CD4-positive, alpha-beta memory T cell (primary cell): ENCODE measurements at regions of chr17 and their contacts with region 1.

Region 1: DNA sequence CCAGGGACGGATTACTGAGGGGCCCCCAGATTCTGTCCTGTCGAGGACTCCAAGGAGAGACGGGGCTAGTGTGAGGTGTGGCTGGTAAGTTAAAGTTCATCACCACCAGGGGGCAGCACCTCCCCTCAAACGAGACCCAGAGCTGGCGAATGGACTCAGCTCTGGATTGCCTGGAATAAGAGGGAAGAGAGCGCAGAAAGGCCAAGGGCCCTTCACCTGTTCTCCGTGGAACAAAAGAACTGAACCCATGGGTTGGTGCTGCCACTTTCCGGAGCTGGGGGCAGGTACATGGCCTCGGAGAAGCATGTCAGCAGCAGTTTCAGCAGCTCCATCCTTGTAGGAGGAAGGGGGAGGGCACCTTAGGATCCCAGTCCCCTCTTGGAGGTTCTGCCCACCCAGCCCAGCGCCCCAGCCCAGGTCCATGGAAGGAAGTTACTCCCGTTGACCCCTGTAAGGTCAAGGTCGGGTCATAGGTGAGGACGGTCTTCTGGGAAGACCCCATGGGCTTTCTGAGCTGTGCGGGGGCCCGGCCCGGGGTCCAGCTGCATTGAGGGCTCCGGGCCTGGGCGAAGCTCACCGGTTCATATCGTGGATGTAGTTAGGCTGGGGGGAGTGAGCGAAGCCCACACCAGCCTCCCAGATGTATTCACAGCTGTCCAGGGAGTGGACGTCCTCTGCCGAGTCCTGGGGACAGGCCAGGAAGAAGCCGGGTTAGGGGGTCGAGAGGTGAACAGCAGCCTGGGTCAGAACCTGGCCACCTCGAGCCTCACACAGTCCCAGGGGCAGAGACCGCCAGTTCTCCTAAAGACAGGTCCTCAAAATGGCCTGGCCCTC is 10.7 kb downstream of the HID1 start:
- DNase-seq: peak; percentile 76 to 80 (median 77)
- H3K4me3 ChIP-seq: no peak overlapping the region
- H3K4me3 Mint-ChIP-seq: peak overlapping the region in 1 of 8 donors; percentile 31
- H3K27ac ChIP-seq: no peak overlapping the region
- H3K27ac Mint-ChIP-seq: peak overlapping the region in 2 of 7 donors; percentile 59 to 66
- H3K4me1 ChIP-seq: peaks cover 6% of the 10 kb centered on the region
- H3K4me1 Mint-ChIP-seq: peaks cover 4 to 13% (median 8%) of the 10 kb centered on the region in 4 donors
- H3K27me3 ChIP-seq: no peaks in the 10 kb centered on the region
- H3K27me3 Mint-ChIP-seq: no peaks in the 10 kb centered on the region

Region 2: GRCh38 chr17:74790161-74791054 is 171.5 kb before region 1 on chr17:
- CTCF ChIA-PET with region 1: interaction called, 9 read pairs
- POLR2A ChIA-PET with region 1: no interaction called
- intact Hi-C with region 1: loop called (anchors 1 kb)
- DNase-seq: no peak
- H3K4me3 ChIP-seq: no peak overlapping the region
- H3K4me3 Mint-ChIP-seq: peak overlapping the region in 6 of 8 donors; percentile 51 to 70 (median 58)
- H3K27ac ChIP-seq: no peak overlapping the region
- H3K27ac Mint-ChIP-seq: peak overlapping the region in 4 of 7 donors; percentile 42 to 82 (median 68)
- H3K4me1 ChIP-seq: peaks cover 19% of the 10 kb centered on the region
- H3K4me1 Mint-ChIP-seq: peaks cover 17 to 41% (median 29%) of the 10 kb centered on the region in 4 donors
- H3K27me3 ChIP-seq: no peaks in the 10 kb centered on the region
- H3K27me3 Mint-ChIP-seq: no peaks in the 10 kb centered on the region

Region 3: DNA sequence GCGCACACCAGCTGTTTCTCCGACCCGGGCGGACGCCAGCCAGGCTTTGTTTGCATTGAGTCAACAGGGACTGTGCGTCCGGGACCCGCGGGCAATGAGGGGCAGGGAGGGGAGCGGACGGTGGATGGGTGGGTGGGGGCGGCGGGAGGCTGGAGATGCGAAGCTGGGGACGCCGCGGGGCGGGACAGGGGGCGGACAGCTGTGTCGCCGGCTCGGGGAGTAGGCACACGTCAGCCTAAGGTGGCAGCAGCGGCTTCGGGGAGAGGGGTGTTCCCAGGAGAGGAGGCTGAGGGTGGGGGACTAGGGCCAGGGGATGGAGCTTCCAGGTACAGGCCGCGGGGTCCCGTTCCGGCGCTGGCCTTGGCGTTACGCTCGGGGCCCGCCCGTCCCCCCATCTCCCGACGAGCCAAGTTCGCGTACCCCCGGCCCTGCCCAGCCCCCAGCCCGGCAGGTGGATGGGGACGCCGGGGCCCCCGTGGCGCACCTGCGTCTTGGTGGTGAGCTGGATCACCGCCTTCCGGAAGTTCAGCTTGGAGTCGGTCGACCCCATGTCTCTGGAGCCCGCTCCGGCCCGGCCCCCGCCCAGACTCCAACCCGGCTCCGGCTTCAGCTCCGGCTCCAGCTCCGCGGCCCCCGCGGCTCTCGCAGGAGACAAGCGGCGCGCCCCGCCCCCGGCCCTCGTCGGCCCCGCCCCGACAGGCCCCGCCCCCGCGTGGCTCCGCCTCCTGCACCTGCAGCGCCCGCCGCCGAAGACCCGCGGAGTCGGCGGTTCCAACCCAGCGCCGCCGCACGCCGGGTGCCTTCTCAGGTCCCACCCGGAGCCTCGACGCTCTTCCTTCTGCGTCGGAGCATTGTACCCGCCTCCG is 10.5 kb after region 1 on chr17 and contains the start of gene HID1:
- CTCF ChIA-PET with region 1: interaction called, 80 read pairs
- POLR2A ChIA-PET with region 1: interaction called, 8 read pairs
- intact Hi-C with region 1: no loop called
- DNase-seq: peak; percentile 71 to 75 (median 74)
- H3K4me3 ChIP-seq: peak within 1 kb of the TSS; percentile 36 to 62
- H3K4me3 Mint-ChIP-seq: peak within 1 kb of the TSS; percentile 81 to 92 (median 86)
- H3K27ac ChIP-seq: peak within 1 kb of the TSS; percentile 32
- H3K27ac Mint-ChIP-seq: peak within 1 kb of the TSS; percentile 57 to 90 (median 74)
- H3K4me1 ChIP-seq: peaks cover 15% of the 10 kb centered on the region
- H3K4me1 Mint-ChIP-seq: peaks cover 4 to 11% (median 7%) of the 10 kb centered on the region in 4 donors
- H3K27me3 ChIP-seq: no peaks in the 10 kb centered on the region
- H3K27me3 Mint-ChIP-seq: peaks cover 3 to 5% of the 10 kb centered on the region in 2 donors
- total RNA-seq, gene HID1: 17.5 to 19.5 TPM

Region 4: DNA sequence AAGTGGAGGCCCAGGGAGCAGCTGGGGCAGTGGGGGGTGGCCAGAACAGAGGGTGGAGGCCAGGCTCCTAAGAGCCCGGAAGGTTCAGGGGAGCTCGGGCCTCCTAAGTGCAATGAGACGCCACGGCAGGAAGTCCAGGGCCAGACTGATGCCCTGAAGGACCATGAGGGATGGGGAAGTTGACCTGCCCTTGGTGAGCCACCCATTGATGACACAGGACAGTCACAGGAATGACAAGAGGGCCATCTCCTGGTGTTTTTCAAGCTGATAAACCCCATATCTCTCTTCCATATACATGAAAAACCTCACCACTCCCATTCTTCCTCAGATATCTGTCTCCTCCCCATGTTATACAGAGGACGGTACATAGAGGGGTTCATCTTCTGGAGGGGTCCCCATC is 44.8 kb after region 1 on chr17:
- CTCF ChIA-PET with region 1: interaction called, 89 read pairs
- POLR2A ChIA-PET with region 1: interaction called, 20 read pairs
- intact Hi-C with region 1: loop called (anchors 1 kb)
- DNase-seq: no peak
- H3K4me3 ChIP-seq: no peak overlapping the region
- H3K4me3 Mint-ChIP-seq: no peak overlapping the region
- H3K27ac ChIP-seq: no peak overlapping the region
- H3K27ac Mint-ChIP-seq: no peak overlapping the region
- H3K4me1 ChIP-seq: peaks cover under 1% of the 10 kb centered on the region
- H3K4me1 Mint-ChIP-seq: peaks cover 0 to under 1% (median 0%) of the 10 kb centered on the region in 4 donors
- H3K27me3 ChIP-seq: no peaks in the 10 kb centered on the region
- H3K27me3 Mint-ChIP-seq: peaks cover 2% of the 10 kb centered on the region in 2 donors

Region 5: GRCh38 chr17:75034236-75034908 is 72.5 kb after region 1 on chr17:
- CTCF ChIA-PET with region 1: interaction called, 9 read pairs
- POLR2A ChIA-PET with region 1: interaction called, 11 read pairs
- intact Hi-C with region 1: no loop called
- DNase-seq: peak; percentile 73 to 83 (median 75)
- H3K4me3 ChIP-seq: peak overlapping the region; percentile 64 to 70
- H3K4me3 Mint-ChIP-seq: peak overlapping the region; percentile 79 to 91 (median 88)
- H3K27ac ChIP-seq: peak overlapping the region; percentile 55
- H3K27ac Mint-ChIP-seq: peak overlapping the region; percentile 99 to 100 (median 100)
- H3K4me1 ChIP-seq: peaks cover 57% of the 10 kb centered on the region
- H3K4me1 Mint-ChIP-seq: peaks cover 31 to 69% (median 54%) of the 10 kb centered on the region in 4 donors
- H3K27me3 ChIP-seq: no peaks in the 10 kb centered on the region
- H3K27me3 Mint-ChIP-seq: peaks cover 0 to 14% of the 10 kb centered on the region in 2 donors

Region 6: DNA sequence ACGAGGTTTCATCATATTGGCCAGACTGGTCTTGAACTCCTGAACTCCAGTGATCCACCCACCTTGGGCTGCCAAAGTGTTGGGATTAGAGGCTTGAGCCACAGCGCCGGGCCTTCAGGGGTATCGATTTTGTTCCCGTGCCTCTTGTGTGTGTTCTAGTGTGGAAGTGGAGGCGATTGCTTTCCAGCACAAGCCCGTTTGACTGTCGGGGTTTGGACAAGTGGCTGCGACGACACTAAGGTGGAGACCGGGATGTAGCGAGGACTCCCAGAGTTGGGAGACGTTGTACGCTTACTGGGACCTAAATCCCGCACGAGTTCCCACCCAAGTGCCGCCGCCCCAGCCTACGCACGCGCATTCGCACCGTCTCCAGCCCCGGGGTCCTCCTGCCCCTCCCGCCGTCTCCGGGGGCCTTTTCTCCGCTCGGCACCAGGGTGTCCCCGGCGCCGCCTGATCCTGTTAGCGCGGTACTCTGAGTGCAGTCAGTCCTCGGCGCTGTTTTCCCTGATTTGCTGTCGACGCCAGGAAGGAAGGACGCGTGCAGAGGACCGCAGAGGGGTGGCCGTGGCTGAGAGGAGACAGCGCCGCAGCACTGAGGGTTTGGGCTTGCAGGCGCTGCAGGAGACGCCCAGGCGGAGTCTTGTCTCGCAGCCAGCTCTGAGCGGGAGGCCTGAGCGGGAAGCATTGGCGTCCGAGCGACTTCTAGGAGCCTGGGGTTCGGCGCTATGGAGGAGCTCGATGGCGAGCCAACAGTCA is 243.3 kb after region 1 on chr17 and contains the start of gene NUP85:
- CTCF ChIA-PET with region 1: interaction called, 107 read pairs
- POLR2A ChIA-PET with region 1: interaction called, 11 read pairs
- intact Hi-C with region 1: loop called (anchors 1 kb)
- DNase-seq: peak; percentile 88 to 95 (median 93)
- H3K4me3 ChIP-seq: peak within 1 kb of the TSS; percentile 55 to 86
- H3K4me3 Mint-ChIP-seq: peak within 1 kb of the TSS; percentile 93 to 99 (median 96)
- H3K27ac ChIP-seq: peak within 1 kb of the TSS; percentile 80
- H3K27ac Mint-ChIP-seq: peak within 1 kb of the TSS; percentile 99 to 100 (median 99)
- H3K4me1 ChIP-seq: peaks cover 26% of the 10 kb centered on the region
- H3K4me1 Mint-ChIP-seq: peaks cover 15 to 48% (median 24%) of the 10 kb centered on the region in 4 donors
- H3K27me3 ChIP-seq: no peaks in the 10 kb centered on the region
- H3K27me3 Mint-ChIP-seq: no peaks in the 10 kb centered on the region
- total RNA-seq, gene NUP85: 137 to 164 TPM